AG04450 (cell line): ENCODE measurements at regions of chr2 and their contacts with region 1.

Region 1: DNA sequence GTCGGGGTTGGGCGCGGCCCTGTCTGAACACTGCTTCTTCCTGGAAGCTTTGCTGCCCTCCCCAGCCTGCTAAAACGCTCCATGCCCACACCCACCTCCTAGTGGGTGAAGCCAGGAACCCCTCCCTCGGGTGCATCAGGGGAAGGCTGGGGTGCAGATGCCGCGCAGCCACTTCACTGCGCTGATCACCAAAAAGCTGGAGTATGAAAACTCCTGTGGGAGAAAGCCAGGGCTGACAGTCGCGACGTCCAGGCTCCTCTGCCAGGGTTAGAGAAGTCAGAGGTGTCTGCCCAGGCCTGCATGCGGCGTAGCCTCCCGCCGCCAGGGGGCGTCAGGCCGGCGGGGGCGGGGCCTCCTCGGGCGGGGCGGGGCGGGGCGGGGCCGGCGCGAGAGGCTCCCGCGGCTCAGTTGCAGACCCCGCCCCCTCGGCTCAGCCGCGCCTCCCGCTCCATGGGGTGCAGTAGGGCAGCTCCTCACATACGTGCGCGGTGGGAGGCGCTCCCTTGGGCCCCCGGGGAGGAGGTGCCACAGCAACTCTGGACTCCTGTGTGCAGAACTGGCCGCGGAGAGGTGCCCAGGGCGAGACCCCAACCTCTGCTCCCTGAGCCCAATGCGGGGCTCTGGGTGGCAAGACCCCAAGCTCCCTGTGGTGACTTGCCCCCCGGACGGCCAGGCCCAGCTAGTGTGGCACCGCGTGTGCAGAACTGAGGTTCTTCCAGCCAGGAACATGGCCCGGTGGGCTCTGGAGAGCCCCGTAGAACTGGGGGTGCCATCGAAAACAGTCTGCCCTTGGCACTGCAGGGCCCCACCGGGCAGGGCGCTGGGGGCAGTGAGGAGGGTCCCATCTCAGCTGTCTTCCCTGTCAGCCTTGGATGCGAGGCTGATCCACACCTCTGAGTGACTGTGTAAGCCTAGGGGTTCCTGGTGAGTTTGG is 1.8 kb upstream of the RNPEPL1 start:
- DNase-seq: no peak
- H3K4me3 ChIP-seq: peak overlapping the region; percentile 76
- H3K27ac ChIP-seq: peak overlapping the region; percentile 89
- H3K27me3 ChIP-seq: no peaks in the 10 kb centered on the region
- CTCF ChIP-seq: peak; percentile 66

Region 2: GRCh38 chr2:240579771-240580614 is 13.5 kb after region 1 on chr2:
- CTCF ChIA-PET with region 1: interaction called, 31 read pairs
- POLR2A ChIA-PET with region 1: interaction called, 15 read pairs
- DNase-seq: no peak
- H3K4me3 ChIP-seq: no peak overlapping the region
- H3K27ac ChIP-seq: peak overlapping the region; percentile 47
- H3K27me3 ChIP-seq: no peaks in the 10 kb centered on the region
- CTCF ChIP-seq: no peak

Region 3: DNA sequence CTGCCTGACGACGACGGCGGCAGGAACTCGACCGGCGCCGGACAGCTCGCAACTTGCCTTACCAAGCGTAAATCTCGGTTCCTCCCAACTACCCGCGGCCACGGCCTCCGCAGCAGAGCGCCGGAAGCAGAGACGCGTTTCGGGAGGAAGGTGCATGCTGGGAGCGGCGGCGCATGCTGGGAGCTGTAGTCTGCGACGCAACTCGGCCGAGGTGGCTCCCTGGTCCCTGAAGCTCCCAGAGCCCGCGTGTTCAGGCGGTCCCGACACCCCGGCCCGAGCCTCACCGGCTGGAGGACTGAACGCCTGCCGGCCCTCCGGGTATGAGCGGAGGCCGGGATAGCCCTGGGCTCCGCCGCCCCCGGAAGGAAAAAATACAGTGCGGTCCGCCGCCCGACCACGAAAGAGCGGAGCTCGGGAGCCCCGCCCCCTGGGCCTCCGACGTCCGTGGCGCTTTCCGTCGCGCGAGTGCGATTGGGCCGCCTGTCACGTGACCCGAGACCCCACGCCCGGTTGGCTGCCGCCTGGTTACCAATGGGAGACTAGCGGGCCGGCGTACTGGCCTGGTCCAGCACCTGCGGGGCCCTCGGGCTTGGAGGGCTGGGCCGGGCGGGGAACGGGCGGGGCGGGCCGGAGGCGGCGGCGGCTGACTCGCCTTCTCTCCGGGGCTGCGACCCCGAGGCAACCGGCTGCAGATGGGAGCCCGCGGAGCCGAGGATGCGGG is 19.9 kb after region 1 on chr2 and contains the start of gene CAPN10:
- CTCF ChIA-PET with region 1: interaction called, 31 read pairs
- POLR2A ChIA-PET with region 1: interaction called, 22 read pairs
- DNase-seq: peak; percentile 78
- H3K4me3 ChIP-seq: peak within 1 kb of the TSS; percentile 99
- H3K27ac ChIP-seq: peak within 1 kb of the TSS; percentile 78
- H3K27me3 ChIP-seq: no peaks in the 10 kb centered on the region
- CTCF ChIP-seq: no peak
- polyA plus RNA-seq, gene CAPN10: 5.6 and 7.5 TPM in 2 replicates